ENCODE measurements at regions of chr10 and their contacts with region 1.

Region 1: GRCh38 chr10:63396133-63396761 is 69.5 kb downstream of the JMJD1C start:
- DNase-seq: no peak
- ATAC-seq: no peak
- H3K4me3 ChIP-seq: no peak overlapping the region
- H3K27ac ChIP-seq: no peak overlapping the region
- H3K4me1 ChIP-seq: no peaks in the 10 kb centered on the region
- H3K27me3 ChIP-seq: no peaks in the 10 kb centered on the region
- CTCF ChIP-seq: no peak
- EP300 ChIP-seq: no peak
- POLR2A ChIP-seq: no peak
- RAD21 ChIP-seq: no peak

Region 2: GRCh38 chr10:63297941-63298340 is 98.3 kb before region 1 on chr10:
- CTCF ChIA-PET with region 1: no interaction called
- POLR2A ChIA-PET with region 1: no interaction called
- in situ Hi-C with region 1: no loop called
- intact Hi-C with region 1: no loop called
- DNase-seq: no peak
- ATAC-seq: peak; percentile 65
- H3K4me3 ChIP-seq: no peak overlapping the region
- H3K27ac ChIP-seq: no peak overlapping the region
- H3K4me1 ChIP-seq: peaks cover 35% of the 10 kb centered on the region
- H3K27me3 ChIP-seq: no peaks in the 10 kb centered on the region
- CTCF ChIP-seq: no peak
- EP300 ChIP-seq: no peak
- POLR2A ChIP-seq: no peak
- RAD21 ChIP-seq: no peak

Region 3: GRCh38 chr10:63413429-63413828 is 17.2 kb after region 1 on chr10:
- CTCF ChIA-PET with region 1: no interaction called
- POLR2A ChIA-PET with region 1: no interaction called
- in situ Hi-C with region 1: no loop called
- intact Hi-C with region 1: loop called (anchors 1 kb)
- DNase-seq: no peak
- ATAC-seq: no peak
- H3K4me3 ChIP-seq: no peak overlapping the region
- H3K27ac ChIP-seq: no peak overlapping the region
- H3K4me1 ChIP-seq: peaks cover 19% of the 10 kb centered on the region
- H3K27me3 ChIP-seq: no peaks in the 10 kb centered on the region
- CTCF ChIP-seq: no peak
- EP300 ChIP-seq: no peak
- POLR2A ChIP-seq: no peak
- RAD21 ChIP-seq: no peak